Upper lobe of right lung (tissue), 1 donor: ENCODE measurements at regions of chr14 and their contacts with region 1.

Region 1: GRCh38 chr14:75577729-75578101 is 705 bp upstream of the FLVCR2 start:
- DNase-seq: peak; percentile 92
- ATAC-seq: peak; percentile 89
- H3K4me3 ChIP-seq: peak overlapping the region; percentile 70
- H3K27ac ChIP-seq: peak overlapping the region; percentile 83
- H3K4me1 ChIP-seq: peaks cover 6% of the 10 kb centered on the region
- H3K27me3 ChIP-seq: no peaks in the 10 kb centered on the region
- CTCF ChIP-seq: peak; percentile 71

Region 2: GRCh38 chr14:75654127-75654732 is 76.5 kb after region 1 on chr14:
- intact Hi-C with region 1: loop called (anchors 5 kb)
- DNase-seq: peak; percentile 85
- ATAC-seq: peak; percentile 96
- H3K4me3 ChIP-seq: no peak overlapping the region
- H3K27ac ChIP-seq: no peak overlapping the region
- H3K4me1 ChIP-seq: no peaks in the 10 kb centered on the region
- H3K27me3 ChIP-seq: no peaks in the 10 kb centered on the region
- CTCF ChIP-seq: peak; percentile 99